PC-3 (cell line): ENCODE measurements at regions of chr17 and their contacts with region 1.

Region 1: DNA sequence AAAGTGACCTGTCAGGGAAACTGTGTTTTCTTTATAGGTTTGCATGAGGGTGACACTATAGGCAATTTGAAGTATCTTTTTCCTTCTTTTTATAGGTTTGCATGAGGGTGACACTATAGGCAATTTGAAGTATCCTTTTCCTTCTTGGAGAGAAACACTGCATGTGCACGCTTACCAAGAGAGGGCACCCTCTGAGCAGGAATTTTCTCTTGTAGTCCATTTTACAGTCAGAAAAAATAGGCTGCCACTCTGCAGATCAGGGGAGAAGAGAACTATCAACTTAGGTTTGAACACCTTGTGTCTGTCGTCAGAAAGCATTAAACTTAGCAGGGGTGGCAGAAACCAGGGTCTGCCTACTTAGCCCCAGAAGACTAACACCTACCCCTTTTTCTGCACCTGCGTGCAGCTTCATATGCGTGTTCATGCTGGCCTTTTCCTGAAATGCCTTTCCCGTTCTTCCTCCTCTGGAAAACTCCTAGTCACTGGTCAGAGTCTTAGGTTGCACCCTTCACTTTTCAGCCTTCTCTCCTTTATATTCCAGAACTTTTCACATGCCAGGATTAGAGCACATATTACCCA is 16.4 kb upstream of the SMIM36 start:
- DNase-seq: peak; percentile 70
- ATAC-seq: peak; percentile 75
- H3K4me3 ChIP-seq: no peak overlapping the region
- H3K27ac ChIP-seq: no peak overlapping the region
- H3K4me1 ChIP-seq: no peaks in the 10 kb centered on the region
- H3K27me3 ChIP-seq: peaks cover 12% of the 10 kb centered on the region; the same call in 1 of the 2 replicates
- CTCF ChIP-seq: peak; percentile 88

Region 2: DNA sequence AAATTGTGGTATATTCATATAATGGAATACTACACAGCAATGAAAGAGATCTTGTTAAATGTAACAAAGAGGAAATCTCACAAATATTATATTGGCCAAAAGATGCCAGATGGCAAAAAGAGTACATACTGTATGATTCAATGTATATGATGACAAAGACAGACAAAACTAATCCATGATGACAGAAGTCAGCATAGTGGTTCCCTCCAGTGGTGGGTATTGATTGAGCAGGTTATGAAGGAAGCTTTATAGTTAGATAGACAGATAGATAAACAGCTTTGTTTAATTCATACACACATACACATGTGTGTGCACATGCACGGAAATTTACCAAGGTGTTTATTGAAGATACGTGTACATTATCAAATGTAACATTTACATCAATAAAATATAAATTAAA is 58.0 kb after region 1 on chr17:
- CTCF ChIA-PET with region 1: no interaction called
- POLR2A ChIA-PET with region 1: no interaction called
- intact Hi-C with region 1: loop called (anchors 1 kb)
- DNase-seq: peak; percentile 50
- ATAC-seq: peak; percentile 58
- H3K4me3 ChIP-seq: no peak overlapping the region
- H3K27ac ChIP-seq: no peak overlapping the region
- H3K4me1 ChIP-seq: peaks cover 19% of the 10 kb centered on the region
- H3K27me3 ChIP-seq: no peaks in the 10 kb centered on the region
- CTCF ChIP-seq: peak; percentile 66

Region 3: DNA sequence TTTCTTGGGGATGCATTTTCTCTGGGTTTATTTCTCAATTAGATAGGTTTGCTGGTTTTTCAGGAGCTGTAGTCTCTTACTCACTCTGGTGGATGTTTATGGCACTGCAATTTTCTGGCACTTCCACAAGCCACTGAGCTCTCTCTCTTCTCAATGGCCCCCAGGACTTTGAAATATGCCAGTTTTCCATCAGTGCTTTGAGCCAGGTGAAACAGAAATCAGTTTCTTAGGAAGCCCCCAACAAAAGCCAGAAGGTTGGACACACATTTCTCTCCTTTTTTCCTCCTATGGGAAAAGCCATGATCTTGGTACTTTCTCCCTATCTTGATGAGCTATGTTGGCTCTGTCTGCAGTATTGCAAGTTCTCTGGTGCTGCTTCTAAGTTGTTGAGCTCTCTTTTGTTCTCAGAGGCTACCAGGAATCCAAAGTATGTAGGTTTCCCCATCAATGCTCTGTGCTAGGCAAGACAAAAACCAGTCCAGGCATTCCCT is 74.3 kb after region 1 on chr17:
- CTCF ChIA-PET with region 1: interaction called, 8 read pairs
- POLR2A ChIA-PET with region 1: no interaction called
- intact Hi-C with region 1: loop called (anchors 1 kb)
- DNase-seq: peak; percentile 77
- ATAC-seq: peak; percentile 76
- H3K4me3 ChIP-seq: no peak overlapping the region
- H3K27ac ChIP-seq: no peak overlapping the region
- H3K4me1 ChIP-seq: peaks cover 5% of the 10 kb centered on the region; the same call in 1 of the 2 replicates
- H3K27me3 ChIP-seq: peaks cover 19% of the 10 kb centered on the region
- CTCF ChIP-seq: peak; percentile 93

Region 4: GRCh38 chr17:55641676-55642081 is 114.0 kb after region 1 on chr17:
- CTCF ChIA-PET with region 1: interaction called, 6 read pairs
- POLR2A ChIA-PET with region 1: no interaction called
- intact Hi-C with region 1: loop called (anchors 1 kb)
- DNase-seq: peak; percentile 74
- ATAC-seq: peak; percentile 86
- H3K4me3 ChIP-seq: no peak overlapping the region
- H3K27ac ChIP-seq: no peak overlapping the region
- H3K4me1 ChIP-seq: no peaks in the 10 kb centered on the region
- H3K27me3 ChIP-seq: peaks cover 74% of the 10 kb centered on the region
- CTCF ChIP-seq: peak; percentile 88

Region 5: GRCh38 chr17:55717898-55718735 is 190.5 kb after region 1 on chr17:
- CTCF ChIA-PET with region 1: no interaction called
- POLR2A ChIA-PET with region 1: no interaction called
- intact Hi-C with region 1: loop called (anchors 1 kb)
- DNase-seq: peak; percentile 90
- ATAC-seq: peak; percentile 81
- H3K4me3 ChIP-seq: no peak overlapping the region
- H3K27ac ChIP-seq: no peak overlapping the region
- H3K4me1 ChIP-seq: no peaks in the 10 kb centered on the region
- H3K27me3 ChIP-seq: peaks cover 51% of the 10 kb centered on the region
- CTCF ChIP-seq: peak; percentile 93

Region 6: GRCh38 chr17:55770148-55770870 is 242.7 kb after region 1 on chr17:
- CTCF ChIA-PET with region 1: no interaction called
- POLR2A ChIA-PET with region 1: no interaction called
- intact Hi-C with region 1: loop called (anchors 1 kb)
- DNase-seq: peak; percentile 86
- ATAC-seq: peak; percentile 89
- H3K4me3 ChIP-seq: no peak overlapping the region
- H3K27ac ChIP-seq: no peak overlapping the region; the same call in 1 of the 2 replicates
- H3K4me1 ChIP-seq: peaks cover 15% of the 10 kb centered on the region
- H3K27me3 ChIP-seq: no peaks in the 10 kb centered on the region
- CTCF ChIP-seq: peak; percentile 84

Region 7: GRCh38 chr17:55825213-55825612 is 297.6 kb after region 1 on chr17:
- CTCF ChIA-PET with region 1: interaction called, 3 read pairs
- POLR2A ChIA-PET with region 1: no interaction called
- intact Hi-C with region 1: loop called (anchors 1 kb)
- DNase-seq: peak; percentile 55
- ATAC-seq: peak; percentile 70
- H3K4me3 ChIP-seq: no peak overlapping the region
- H3K27ac ChIP-seq: no peak overlapping the region
- H3K4me1 ChIP-seq: no peaks in the 10 kb centered on the region
- H3K27me3 ChIP-seq: peaks cover 67% of the 10 kb centered on the region
- CTCF ChIP-seq: peak; percentile 80